Activated CD8-positive, alpha-beta memory T cell treated with anti-CD3 and anti-CD28 coated beads, Interleukin-2, amount 10 ng/mL, durations not matched to agents 7 days and 5 days (primary cell): ENCODE measurements at regions of chr15 and their contacts with region 1.

Region 1: DNA sequence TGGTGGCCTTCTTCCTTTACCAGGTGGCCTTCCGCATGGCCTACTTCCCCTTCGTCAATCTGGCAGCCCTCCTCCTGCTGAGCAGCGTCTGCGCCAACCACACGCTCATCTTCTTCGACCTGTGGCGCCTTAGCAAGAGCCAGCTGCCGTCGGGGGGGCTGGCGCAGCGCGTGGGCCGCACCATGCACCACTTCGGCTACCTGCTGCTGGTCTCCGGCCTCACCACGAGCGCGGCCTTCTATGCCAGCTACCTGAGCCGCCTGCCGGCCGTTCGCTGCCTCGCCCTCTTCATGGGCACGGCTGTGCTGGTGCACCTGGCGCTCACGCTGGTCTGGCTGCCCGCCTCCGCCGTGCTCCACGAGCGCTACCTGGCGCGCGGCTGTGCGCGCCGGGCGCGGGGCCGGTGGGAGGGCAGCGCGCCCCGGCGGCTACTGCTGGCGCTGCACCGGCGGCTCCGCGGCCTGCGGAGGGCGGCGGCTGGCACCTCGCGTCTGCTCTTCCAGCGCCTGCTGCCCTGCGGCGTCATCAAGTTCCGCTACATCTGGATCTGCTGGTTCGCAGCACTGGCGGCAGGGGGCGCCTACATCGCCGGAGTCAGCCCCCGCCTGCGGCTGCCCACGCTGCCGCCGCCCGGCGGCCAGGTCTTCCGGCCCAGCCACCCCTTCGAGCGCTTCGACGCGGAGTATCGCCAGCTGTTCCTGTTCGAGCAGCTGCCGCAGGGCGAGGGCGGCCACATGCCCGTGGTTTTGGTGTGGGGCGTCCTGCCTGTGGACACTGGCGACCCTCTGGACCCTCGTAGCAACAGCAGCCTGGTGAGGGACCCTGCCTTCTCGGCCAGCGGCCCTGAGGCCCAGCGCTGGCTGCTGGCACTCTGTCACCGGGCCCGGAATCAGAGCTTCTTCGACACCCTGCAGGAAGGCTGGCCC is 9.9 kb downstream of the DISP2 start:
- DNase-seq: peak; percentile 93
- ATAC-seq: peak; percentile 96
- H3K4me3 Mint-ChIP-seq: peak overlapping the region; percentile 76
- H3K27ac Mint-ChIP-seq: peak overlapping the region; percentile 71
- H3K4me1 Mint-ChIP-seq: peaks cover 14% of the 10 kb centered on the region
- H3K27me3 Mint-ChIP-seq: peaks cover 15% of the 10 kb centered on the region

Region 2: DNA sequence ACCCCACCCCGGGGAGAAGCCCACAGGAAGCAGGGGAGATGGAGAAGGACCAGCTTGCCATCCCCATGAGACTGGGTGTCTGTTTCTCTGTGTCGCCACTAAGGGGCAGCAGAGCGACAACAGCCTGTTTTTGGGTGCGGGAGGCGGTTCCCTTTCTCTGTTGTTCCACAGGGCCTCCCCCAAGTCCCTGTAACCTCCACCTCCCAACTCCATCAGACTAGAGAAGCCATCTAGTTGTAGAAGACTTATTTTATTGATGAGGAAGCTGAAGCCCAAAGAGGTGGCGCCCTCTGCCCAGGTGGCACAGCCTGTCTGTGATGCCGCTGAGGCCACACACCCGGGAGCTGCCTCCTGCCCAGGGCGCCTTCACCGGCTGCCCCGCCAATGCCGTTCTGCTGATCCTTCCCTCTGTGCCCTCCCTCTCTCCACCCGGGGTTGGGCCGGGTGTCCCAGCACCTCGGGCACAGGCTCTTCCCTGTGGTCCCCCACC is 23.3 kb before region 1 on chr15:
- CTCF ChIA-PET with region 1: interaction called, 53 read pairs
- DNase-seq: peak; percentile 83
- ATAC-seq: peak; percentile 86
- H3K4me3 Mint-ChIP-seq: no peak overlapping the region
- H3K27ac Mint-ChIP-seq: no peak overlapping the region
- H3K4me1 Mint-ChIP-seq: no peaks in the 10 kb centered on the region
- H3K27me3 Mint-ChIP-seq: no peaks in the 10 kb centered on the region

Region 3: DNA sequence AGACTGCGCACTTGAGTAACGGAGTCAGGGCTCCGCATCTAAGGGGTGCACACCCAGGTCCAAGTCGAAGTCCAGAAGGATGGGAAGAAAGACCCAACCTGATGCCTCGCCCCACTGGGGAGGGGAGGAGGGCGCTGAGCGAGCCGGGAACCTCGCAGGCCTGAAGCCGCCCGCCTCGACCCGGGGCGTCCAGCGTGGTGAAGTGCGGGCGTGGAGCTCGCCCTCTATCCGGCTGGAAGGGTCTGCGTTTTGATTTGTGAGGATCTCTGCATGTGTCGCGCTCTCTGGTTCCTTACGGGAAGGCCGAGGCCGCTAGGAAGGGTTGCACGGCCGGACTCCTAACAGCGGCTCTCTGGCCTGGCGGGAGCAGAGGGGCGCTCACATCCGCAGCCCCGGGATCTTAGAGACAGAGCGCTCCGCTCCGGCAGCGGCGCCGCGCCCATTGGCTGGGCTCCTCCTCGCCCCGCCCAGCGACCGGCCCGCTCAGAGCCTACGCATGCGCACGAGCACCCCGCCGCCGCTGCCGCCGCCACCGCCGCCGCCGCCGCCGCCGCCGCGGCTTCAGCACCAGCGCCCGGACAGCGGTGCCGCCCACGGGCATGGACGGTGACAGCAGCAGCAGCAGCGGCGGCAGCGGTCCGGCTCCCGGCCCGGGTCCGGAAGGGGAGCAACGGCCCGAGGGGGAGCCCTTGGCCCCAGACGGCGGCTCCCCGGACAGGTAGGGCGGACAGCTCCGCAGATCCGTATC is 10.1 kb before region 1 on chr15 and contains the start of gene DISP2:
- CTCF ChIA-PET with region 1: interaction called, 47 read pairs
- DNase-seq: peak; percentile 89
- ATAC-seq: peak; percentile 93
- H3K4me3 Mint-ChIP-seq: peak within 1 kb of the TSS; percentile 70
- H3K27ac Mint-ChIP-seq: no peak within 1 kb of the TSS
- H3K4me1 Mint-ChIP-seq: peaks cover 9% of the 10 kb centered on the region
- H3K27me3 Mint-ChIP-seq: peaks cover 10% of the 10 kb centered on the region
- total RNA-seq, gene DISP2: 0.23 to 0.37 TPM

Region 4: DNA sequence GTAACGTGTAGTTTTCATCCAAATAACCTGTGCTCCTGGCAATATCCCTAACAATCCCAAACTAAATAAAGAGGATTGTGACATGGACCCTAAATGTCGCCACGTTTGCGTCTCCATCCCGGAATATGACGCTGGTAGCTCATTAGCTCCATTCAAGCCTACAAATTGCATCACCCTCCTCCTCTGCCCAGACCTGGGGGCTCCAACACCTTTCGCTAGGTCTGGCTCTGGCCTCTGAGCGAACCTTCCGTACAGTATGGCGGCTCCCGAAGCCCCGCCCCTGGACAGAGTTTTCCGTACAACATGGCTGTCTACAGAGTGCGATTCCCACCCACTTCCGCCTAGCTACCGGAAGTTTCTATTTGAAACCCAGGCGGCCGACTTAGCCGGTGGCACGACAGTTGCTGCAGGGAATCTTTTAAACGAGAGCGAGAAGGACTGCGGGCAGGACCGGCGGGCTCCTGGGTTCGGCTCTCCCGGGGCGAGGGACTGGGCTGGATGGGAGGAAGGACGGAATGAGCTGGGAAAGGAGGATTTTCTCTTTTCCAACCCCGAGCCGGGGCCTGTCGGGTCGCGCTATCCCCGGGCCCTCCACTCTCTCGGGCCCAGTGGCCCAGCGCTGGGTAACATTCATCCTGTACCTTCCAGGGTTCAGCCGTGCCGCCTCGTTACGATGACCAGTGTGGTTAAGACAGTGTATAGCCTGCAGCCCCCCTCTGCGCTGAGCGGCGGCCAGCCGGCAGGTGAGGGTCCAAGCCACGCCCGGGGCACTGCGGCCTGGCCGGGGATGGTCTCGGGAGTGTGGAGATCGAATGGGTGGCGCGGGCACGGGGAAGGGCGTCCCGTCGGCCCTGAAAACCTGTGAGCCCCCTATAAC is 14.9 kb after region 1 on chr15 and contains the start of gene KNSTRN:
- CTCF ChIA-PET with region 1: interaction called, 55 read pairs
- DNase-seq: peak; percentile 96
- ATAC-seq: peak; percentile 100
- H3K4me3 Mint-ChIP-seq: peak within 1 kb of the TSS; percentile 94
- H3K27ac Mint-ChIP-seq: peak within 1 kb of the TSS; percentile 86
- H3K4me1 Mint-ChIP-seq: peaks cover 26% of the 10 kb centered on the region
- H3K27me3 Mint-ChIP-seq: peaks cover 5% of the 10 kb centered on the region
- total RNA-seq, gene KNSTRN: 77.1 to 82.0 TPM

Region 5: GRCh38 chr15:40405501-40406381 is 37.8 kb after region 1 on chr15 and contains the start of gene IVD:
- CTCF ChIA-PET with region 1: interaction called, 25 read pairs
- DNase-seq: peak; percentile 97
- ATAC-seq: peak; percentile 99
- H3K4me3 Mint-ChIP-seq: peak within 1 kb of the TSS; percentile 76
- H3K27ac Mint-ChIP-seq: peak within 1 kb of the TSS; percentile 90
- H3K4me1 Mint-ChIP-seq: peaks cover 54% of the 10 kb centered on the region
- H3K27me3 Mint-ChIP-seq: no peaks in the 10 kb centered on the region
- total RNA-seq, gene IVD: 70.3 to 87.2 TPM

Region 6: DNA sequence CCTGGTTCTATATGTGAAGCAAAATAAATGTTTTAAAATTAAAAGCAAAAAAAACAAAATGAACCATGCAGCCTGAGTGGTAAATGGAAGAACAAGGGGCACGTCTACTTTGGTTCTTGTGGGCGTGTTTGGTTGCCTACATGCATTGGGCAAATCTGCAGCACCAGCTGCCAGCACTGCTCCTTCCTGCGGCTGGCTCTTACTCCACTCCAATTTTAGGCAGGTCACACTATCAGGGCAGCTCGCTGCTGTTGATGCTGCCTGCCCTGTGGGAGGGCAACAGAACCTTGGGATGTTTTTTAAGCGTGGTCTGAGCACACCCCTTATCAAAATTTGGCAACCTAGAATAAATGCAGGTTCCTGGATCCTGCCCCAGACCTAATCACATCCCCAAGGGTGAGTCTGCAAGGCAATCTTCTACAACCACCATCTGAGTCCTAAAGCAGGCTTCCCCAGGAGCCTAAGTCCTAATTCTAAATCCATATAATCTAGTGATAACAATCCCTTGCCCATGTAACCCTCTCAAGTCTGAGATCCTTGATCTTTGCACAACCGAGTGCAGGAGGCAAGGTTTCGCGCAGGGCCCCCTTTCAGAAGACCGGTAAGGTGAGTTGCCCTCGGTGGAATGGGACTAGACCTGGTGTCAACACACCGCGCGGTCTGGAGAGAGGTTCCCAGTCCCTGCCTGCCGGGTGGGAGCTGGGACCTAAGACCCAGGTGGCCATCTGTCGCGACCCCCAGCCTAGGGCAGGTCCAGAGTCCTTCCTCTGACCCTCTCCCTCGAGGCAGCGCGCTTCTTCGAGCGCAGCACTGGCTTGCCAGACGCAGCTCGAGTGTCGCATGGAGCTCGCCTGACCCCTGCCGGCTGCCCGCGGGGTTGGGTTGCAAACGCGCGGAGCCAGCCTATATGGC is 53.6 kb after region 1 on chr15:
- CTCF ChIA-PET with region 1: interaction called, 138 read pairs
- DNase-seq: peak; percentile 87
- ATAC-seq: peak; percentile 99
- H3K4me3 Mint-ChIP-seq: no peak overlapping the region
- H3K27ac Mint-ChIP-seq: no peak overlapping the region
- H3K4me1 Mint-ChIP-seq: peaks cover 7% of the 10 kb centered on the region
- H3K27me3 Mint-ChIP-seq: no peaks in the 10 kb centered on the region

Region 7: DNA sequence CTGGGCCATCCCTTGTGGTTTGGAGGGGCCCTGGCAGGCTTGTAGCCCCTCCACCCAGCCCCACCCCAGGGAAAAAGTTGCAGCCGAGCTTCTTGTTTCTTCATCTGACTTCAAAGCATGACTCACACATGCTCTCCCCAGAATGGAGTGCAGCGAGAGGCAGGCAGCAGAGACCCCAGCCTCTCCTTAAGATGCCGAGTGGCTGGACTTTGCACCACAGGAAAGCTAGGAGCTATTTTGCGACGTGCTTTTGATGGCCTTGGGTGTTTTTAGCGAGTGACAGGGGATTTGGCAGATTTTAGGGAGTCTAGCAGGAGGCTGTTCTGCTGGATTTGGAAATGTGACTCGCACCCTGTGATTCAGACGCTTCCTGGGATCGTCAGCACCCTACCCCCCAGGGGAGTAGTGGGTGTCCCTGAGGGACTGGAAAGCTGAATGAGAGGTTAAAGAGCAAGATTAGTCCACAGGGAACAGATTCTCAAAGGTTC is 87.0 kb after region 1 on chr15:
- CTCF ChIA-PET with region 1: no interaction called
- DNase-seq: no peak
- ATAC-seq: no peak
- H3K4me3 Mint-ChIP-seq: no peak overlapping the region
- H3K27ac Mint-ChIP-seq: peak overlapping the region; percentile 42
- H3K4me1 Mint-ChIP-seq: peaks cover 50% of the 10 kb centered on the region
- H3K27me3 Mint-ChIP-seq: no peaks in the 10 kb centered on the region